Transverse colon (tissue), 4 donors: ENCODE measurements at regions of chr18 and their contacts with region 1.

Region 1: DNA sequence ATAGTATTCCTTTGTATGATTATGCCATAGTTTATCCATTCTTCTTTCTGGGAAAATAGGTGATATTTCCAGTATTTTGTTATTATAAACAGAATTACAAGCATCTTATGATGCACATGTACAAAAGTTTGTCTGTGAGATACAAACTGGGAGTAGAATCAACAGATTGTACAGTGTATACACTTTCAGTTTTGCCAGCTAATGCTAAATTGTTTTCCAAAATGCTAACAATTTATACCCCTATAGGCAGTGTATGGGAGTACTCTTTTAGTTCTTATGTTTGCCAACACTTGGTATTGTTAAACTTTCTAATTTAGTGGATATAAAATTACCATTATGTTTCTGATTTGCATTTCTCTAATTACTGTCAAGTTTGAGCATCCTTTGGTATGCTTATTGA is 31.0 kb upstream of the TNFRSF11A start:
- DNase-seq: no peak
- H3K4me3 ChIP-seq: no peak overlapping the region
- H3K27ac ChIP-seq: no peak overlapping the region
- H3K4me1 ChIP-seq: peaks cover 0 to 9% (median 7%) of the 10 kb centered on the region in 4 donors
- H3K27me3 ChIP-seq: no peaks in the 10 kb centered on the region
- CTCF ChIP-seq: no peak
- EP300 ChIP-seq: no peak
- POLR2A ChIP-seq: no peak

Region 2: DNA sequence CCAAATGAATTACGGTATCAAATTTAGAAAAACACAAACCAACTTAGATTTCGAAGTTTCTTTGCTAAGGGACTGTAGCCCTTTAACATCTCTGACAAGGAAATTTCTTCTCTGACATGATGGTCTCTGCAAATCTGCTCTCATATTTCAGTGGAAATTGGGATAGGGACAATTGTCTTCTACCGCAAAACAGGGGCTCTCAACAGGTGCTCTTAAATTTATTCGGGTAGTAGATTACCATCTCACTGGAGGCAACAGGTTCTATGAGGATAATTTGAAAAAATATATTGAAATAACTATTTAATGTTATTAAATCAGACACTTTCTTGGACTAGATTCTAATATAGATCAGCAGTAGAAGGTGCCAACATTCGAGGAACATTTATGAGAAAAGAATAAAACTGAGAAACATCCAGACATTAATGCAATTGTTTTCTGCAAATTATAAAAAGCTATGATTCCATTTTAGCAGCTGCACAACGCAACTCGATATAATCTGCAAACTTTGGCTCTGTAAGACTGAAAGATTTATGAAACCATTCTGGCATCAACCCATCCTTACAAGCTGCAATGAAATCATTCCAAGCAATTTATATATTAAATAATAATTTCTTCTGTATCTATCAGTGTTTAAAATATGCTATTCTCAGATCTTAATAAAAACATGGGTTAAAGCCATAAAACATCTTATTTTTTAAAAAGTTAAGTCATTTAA is 1035.5 kb after region 1 on chr18:
- in situ Hi-C with region 1: no loop called
- intact Hi-C with region 1: loop called (anchors 5 kb)
- DNase-seq: no peak
- H3K4me3 ChIP-seq: no peak overlapping the region
- H3K27ac ChIP-seq: no peak overlapping the region
- H3K4me1 ChIP-seq: no peaks in the 10 kb centered on the region
- H3K27me3 ChIP-seq: no peaks in the 10 kb centered on the region
- CTCF ChIP-seq: no peak
- EP300 ChIP-seq: no peak
- POLR2A ChIP-seq: no peak

Region 3: DNA sequence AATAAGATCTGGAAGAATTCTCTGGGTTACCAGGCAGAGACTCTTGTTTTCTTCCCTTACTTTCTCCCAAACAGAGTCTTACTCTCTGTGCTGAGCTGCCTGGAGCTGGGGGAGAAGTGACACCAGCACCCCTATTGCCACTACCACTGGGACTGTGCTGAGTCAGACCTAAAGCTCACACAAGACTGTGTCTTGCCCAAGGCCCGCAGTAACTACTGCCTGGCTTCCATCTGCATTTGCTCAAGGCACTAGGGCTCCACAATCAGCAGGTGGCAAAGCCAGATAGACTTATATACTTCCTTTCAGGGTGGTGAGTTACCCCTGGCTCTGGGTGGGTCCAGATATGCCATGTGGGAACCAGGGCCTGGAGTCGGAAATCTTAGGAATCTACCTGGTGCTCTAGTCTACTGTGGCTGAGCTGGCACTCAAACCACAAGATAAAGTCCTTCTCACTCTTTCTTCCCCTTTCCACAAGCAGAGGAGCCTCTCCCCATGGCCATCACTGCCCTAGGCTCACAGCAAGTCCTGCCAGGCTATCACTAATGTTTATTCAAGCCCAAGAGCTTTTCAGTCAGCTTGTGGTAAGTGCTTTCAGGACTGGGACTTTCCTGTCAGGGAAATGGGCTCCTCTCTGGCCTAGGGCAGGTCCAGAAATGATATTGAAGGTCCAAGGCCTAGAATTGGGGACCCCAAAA is 1565.9 kb after region 1 on chr18:
- in situ Hi-C with region 1: no loop called
- intact Hi-C with region 1: no loop called
- DNase-seq: no peak
- H3K4me3 ChIP-seq: no peak overlapping the region
- H3K27ac ChIP-seq: no peak overlapping the region
- H3K4me1 ChIP-seq: no peaks in the 10 kb centered on the region
- H3K27me3 ChIP-seq: no peaks in the 10 kb centered on the region
- CTCF ChIP-seq: no peak
- EP300 ChIP-seq: no peak
- POLR2A ChIP-seq: no peak